Right ventricle myocardium inferior (tissue), 1 donor: ENCODE measurements at regions of chr3 and their contacts with region 1.

Region 1: DNA sequence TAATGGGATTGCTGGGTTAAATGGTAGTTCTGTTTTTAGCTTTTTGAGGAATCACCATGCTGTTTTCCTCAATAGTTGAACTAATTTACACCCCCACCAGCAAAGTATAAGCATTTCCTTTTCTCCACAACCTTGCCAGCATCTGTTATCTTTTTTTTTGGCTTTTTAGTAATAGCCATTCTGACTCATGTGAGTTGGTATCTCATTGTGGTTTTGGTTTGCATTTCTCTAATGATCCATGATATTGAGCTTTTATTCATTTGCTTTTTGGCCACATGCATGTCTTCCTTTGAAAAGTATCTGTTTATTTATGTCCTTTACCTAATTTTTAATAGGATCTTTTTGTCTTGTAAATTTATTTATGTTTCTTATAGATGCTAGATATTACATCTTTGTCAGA is 288.2 kb downstream of the EPHA6 start:
- DNase-seq: no peak
- ATAC-seq: no peak

Region 2: GRCh38 chr3:96931119-96931862 is 171.3 kb before region 1 on chr3:
- intact Hi-C with region 1: loop called (anchors 10 kb)
- DNase-seq: no peak
- ATAC-seq: no peak